OCI-LY7 (cell line): ENCODE measurements at regions of chr1 and their contacts with region 1.

Region 1: DNA sequence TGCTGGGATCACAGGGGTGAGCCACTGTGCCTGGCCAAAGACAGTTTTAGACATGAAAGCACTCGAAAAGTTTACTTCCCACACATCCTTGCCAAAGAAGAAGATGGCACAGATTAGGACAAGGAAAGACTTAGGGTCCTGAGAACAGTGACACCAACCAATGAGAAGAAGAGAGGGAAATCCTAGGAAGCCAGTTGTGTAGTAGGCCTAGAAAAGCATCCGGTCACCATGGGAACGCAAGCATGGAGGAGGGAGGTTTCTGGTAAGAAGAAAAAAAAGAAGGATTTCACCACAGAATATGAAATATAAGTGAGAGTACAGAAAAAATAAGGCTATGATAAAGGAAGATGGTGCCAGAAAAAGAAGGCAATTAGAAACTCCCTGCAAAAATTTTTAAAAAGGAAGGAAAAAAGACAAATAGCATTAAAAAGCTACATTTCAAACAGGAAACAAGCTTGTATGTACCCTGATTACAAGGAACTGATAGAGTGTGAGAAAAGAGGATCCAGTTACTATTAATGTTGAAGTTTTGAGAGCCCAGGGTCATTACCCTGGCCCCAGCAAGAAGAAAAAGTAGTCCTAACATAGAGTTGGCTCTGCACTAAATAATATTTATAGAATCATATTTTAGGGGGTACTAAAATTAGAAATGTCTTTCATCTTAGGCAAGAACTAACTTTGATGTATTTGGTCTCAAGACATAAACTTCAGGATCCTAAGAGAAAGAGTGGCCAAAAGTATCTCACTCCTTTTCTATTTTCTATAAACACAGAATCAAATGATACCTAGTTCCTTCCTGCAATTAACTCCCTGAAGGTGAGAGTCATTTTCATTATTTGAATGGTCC is 16.1 kb downstream of the DIPK1A start:
- DNase-seq: peak; percentile 47
- H3K4me3 ChIP-seq: peak overlapping the region; percentile 52
- H3K27ac ChIP-seq: peak overlapping the region; percentile 73
- H3K4me1 ChIP-seq: peaks cover 96% of the 10 kb centered on the region
- CTCF ChIP-seq: no peak

Region 2: GRCh38 chr1:92929461-92929860 is 15.7 kb before region 1 on chr1:
- CTCF ChIA-PET with region 1: interaction called, 3 read pairs
- POLR2A ChIA-PET with region 1: interaction called, 24 read pairs
- intact Hi-C with region 1: no loop called
- DNase-seq: no peak
- H3K4me3 ChIP-seq: peak overlapping the region; percentile 16
- H3K27ac ChIP-seq: peak overlapping the region; percentile 50
- H3K4me1 ChIP-seq: peaks cover 79% of the 10 kb centered on the region
- CTCF ChIP-seq: no peak

Region 3: DNA sequence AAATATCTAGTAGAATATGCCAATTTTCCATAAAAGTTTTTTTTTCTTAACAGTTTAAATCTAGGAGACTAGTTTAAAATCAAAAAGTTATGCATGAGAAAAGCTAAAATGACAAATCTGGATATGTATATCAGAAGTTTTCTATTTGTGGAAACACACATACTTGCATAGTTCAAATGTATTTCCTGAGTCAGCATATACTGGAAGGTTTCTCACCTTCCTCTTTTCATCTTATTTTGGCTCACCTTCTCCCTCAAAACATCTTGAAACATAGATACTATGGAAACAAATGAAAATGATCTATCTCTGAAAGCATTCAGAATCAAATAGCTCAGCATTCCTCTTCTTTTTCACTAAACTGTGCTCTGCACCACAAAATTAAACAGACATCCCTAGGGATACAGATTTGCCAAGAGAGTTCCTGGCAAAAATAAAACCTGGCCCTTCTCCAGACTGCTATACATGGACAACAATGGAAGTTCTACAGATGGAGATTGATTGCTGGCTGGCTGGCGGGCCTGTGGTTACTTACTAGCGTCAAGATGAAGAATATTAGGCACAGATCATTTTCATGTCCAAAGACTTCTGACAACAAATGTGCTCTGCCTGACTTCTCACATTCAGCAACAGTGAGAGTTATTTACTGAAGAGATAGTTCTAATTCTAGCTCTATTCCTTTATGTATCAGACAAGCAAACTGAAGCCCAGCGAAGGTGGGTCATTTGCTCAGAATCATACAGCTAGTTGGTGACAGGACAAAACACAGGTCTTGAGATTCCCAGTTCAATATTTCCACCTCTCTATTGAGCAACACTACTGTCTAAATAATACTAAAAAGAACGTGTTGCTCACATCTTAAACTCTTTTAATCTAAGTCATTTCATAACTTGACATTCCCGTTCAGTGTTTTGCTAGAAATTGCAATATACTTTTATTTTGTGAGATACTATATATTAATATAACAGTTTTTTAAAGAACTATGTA is 10.4 kb before region 1 on chr1:
- CTCF ChIA-PET with region 1: interaction called, 3 read pairs
- POLR2A ChIA-PET with region 1: interaction called, 24 read pairs
- intact Hi-C with region 1: no loop called
- DNase-seq: peak; percentile 34
- H3K4me3 ChIP-seq: peak overlapping the region; percentile 29
- H3K27ac ChIP-seq: peak overlapping the region; percentile 1
- H3K4me1 ChIP-seq: peaks cover 68% of the 10 kb centered on the region
- CTCF ChIP-seq: no peak

Region 4: DNA sequence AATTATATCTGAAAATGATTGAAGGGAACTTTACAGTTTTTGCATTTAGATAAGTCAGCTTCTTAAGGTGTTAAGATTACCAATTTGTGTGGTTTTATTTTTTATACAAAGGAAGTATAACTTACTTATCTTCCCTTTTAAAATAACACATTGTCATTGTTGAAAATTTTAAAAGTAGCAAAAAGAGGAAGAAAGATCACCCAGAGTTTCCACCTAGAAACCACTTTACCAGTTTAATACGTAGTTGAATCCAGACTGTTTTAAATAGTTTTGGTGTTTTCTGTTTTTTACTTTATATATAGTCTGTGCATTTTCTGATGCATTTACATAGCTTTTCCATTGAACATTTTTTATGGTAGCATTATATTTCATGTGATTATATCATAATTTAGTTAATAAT is 241.5 kb after region 1 on chr1:
- CTCF ChIA-PET with region 1: no interaction called
- POLR2A ChIA-PET with region 1: no interaction called
- intact Hi-C with region 1: no loop called
- DNase-seq: no peak
- H3K4me3 ChIP-seq: no peak overlapping the region
- H3K27ac ChIP-seq: no peak overlapping the region
- H3K4me1 ChIP-seq: peaks cover 50% of the 10 kb centered on the region
- CTCF ChIP-seq: no peak